ENCODE measurements at regions of chr1 and their contacts with region 1.

Region 1: GRCh38 chr1:203320591-203321272 is 15.4 kb downstream of the BTG2 start:
- DNase-seq: peak; percentile 59 to 89 (median 85)
- H3K4me3 ChIP-seq: peak overlapping the region; percentile 34
- H3K4me3 Mint-ChIP-seq: peak overlapping the region; percentile 33 to 90 (median 80)
- H3K27ac ChIP-seq: peak overlapping the region; percentile 48
- H3K27ac Mint-ChIP-seq: peak overlapping the region; percentile 93 to 99 (median 98)
- H3K4me1 ChIP-seq: peaks cover 75% of the 10 kb centered on the region
- H3K4me1 Mint-ChIP-seq: peaks cover 79 to 92% (median 90%) of the 10 kb centered on the region in 3 donors
- H3K27me3 ChIP-seq: no peaks in the 10 kb centered on the region
- H3K27me3 Mint-ChIP-seq: peaks cover 0 to 3% of the 10 kb centered on the region in 2 donors

Region 2: GRCh38 chr1:203290261-203291089 is 30.3 kb before region 1 on chr1:
- CTCF ChIA-PET with region 1: interaction called, 66 read pairs
- POLR2A ChIA-PET with region 1: interaction called, 140 read pairs
- DNase-seq: peak; percentile 95 to 98 (median 97)
- H3K4me3 ChIP-seq: peak overlapping the region; percentile 76
- H3K4me3 Mint-ChIP-seq: peak overlapping the region; percentile 63 to 87 (median 85)
- H3K27ac ChIP-seq: peak overlapping the region; percentile 99
- H3K27ac Mint-ChIP-seq: peak overlapping the region; percentile 99 to 100 (median 100)
- H3K4me1 ChIP-seq: peaks cover 62% of the 10 kb centered on the region
- H3K4me1 Mint-ChIP-seq: peaks cover 64 to 73% (median 64%) of the 10 kb centered on the region in 3 donors
- H3K27me3 ChIP-seq: no peaks in the 10 kb centered on the region
- H3K27me3 Mint-ChIP-seq: peaks cover 0 to 13% of the 10 kb centered on the region in 2 donors